AG04450 (cell line): ENCODE measurements at regions of chr6 and their contacts with region 1.

Region 1: DNA sequence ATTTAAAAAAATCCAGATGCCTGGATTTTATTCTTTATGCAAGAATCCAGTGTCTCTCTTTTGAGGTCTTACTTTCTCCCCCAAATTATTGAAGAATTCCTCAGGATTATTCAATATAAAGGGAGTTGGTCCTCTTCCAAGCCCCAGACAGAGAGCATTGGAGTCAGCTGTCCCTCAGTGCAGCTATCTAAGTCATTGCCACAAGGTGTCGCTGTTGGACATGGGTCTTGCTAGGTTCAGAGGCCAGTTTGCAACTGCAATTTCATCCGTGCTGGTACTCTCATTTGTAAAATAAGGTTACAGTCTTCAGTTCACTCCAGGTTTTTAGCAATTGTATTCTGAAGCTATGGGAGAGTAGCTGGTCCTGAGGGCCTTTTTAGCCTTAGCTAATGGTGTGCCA is 27.8 kb downstream of the CCN2 start:
- DNase-seq: no peak
- H3K4me3 ChIP-seq: no peak overlapping the region
- H3K27ac ChIP-seq: no peak overlapping the region
- H3K27me3 ChIP-seq: no peaks in the 10 kb centered on the region
- CTCF ChIP-seq: peak; percentile 53

Region 2: DNA sequence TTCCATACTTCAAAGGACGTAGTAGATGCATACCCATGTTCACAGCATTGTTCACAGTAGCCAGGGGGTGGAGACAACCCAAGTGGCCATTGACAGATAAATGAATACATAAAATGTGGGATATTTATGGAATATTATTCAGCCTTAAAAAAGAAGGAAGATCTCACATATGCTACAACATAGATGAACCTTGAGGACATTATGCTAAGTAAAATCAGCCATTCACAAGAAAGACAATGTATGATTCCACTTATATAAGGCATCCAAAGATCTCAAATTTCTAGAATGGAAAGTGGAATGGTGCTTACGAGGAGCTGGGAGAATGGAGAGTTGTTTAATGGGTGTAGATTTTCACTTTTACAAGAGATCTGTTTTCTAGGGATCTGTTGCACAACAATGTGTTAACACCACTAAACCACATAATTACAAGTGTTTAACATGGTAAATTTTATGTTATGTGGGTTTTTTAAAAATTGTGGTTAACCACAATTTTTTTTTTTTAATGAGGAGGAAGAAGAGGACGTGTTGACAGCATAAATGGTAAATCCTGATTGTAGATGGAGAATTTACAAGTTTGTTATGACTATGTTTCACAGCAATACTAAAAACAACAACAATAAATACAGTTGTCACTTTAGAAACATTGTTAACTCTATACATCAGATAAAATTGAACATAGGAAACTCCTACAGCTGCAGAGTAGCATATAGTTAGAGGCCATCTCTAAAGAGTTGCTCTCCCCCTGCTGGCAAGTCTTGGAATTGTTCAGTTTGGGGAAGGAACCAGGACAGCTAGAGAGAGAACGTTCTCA is 13.7 kb before region 1 on chr6:
- CTCF ChIA-PET with region 1: interaction called, 57 read pairs
- POLR2A ChIA-PET with region 1: no interaction called
- DNase-seq: peak; percentile 47
- H3K4me3 ChIP-seq: no peak overlapping the region
- H3K27ac ChIP-seq: no peak overlapping the region
- H3K27me3 ChIP-seq: no peaks in the 10 kb centered on the region
- CTCF ChIP-seq: peak; percentile 94

Region 3: DNA sequence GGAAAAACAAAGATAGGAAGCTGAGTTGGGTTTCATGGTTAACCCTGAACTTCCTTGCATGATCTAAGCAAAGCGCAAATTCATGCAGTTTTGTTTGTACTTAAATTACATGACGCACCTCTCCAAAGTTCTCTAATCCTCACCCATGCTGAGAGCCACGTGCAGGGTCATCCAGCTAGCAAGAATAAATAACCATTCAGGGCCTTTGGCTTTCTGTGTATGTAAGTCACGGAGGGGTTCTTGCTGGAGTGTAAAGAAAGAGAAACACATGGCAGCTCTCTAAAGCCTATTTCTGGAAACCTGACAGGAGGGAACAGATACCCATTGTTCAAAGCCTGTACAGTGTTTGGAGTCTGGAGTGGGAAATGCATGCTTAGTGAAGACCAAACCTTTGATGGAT is 199.5 kb after region 1 on chr6:
- CTCF ChIA-PET with region 1: interaction called, 13 read pairs
- POLR2A ChIA-PET with region 1: no interaction called
- DNase-seq: peak; percentile 100
- H3K4me3 ChIP-seq: no peak overlapping the region
- H3K27ac ChIP-seq: peak overlapping the region; percentile 98
- H3K27me3 ChIP-seq: no peaks in the 10 kb centered on the region
- CTCF ChIP-seq: no peak

Region 4: GRCh38 chr6:132218059-132218696 is 294.8 kb after region 1 on chr6:
- CTCF ChIA-PET with region 1: interaction called, 43 read pairs
- POLR2A ChIA-PET with region 1: no interaction called
- DNase-seq: peak; percentile 23
- H3K4me3 ChIP-seq: no peak overlapping the region
- H3K27ac ChIP-seq: no peak overlapping the region
- H3K27me3 ChIP-seq: no peaks in the 10 kb centered on the region
- CTCF ChIP-seq: peak; percentile 59

Region 5: GRCh38 chr6:132259070-132259469 is 335.7 kb after region 1 on chr6:
- CTCF ChIA-PET with region 1: interaction called, 57 read pairs
- POLR2A ChIA-PET with region 1: no interaction called
- DNase-seq: no peak
- H3K4me3 ChIP-seq: no peak overlapping the region
- H3K27ac ChIP-seq: no peak overlapping the region
- H3K27me3 ChIP-seq: no peaks in the 10 kb centered on the region
- CTCF ChIP-seq: peak; percentile 52

Region 6: GRCh38 chr6:132270726-132271402 is 347.5 kb after region 1 on chr6:
- CTCF ChIA-PET with region 1: interaction called, 16 read pairs
- POLR2A ChIA-PET with region 1: no interaction called
- DNase-seq: no peak
- H3K4me3 ChIP-seq: no peak overlapping the region
- H3K27ac ChIP-seq: no peak overlapping the region
- H3K27me3 ChIP-seq: no peaks in the 10 kb centered on the region
- CTCF ChIP-seq: no peak

Region 7: GRCh38 chr6:132483779-132484679 is 560.7 kb after region 1 on chr6:
- CTCF ChIA-PET with region 1: interaction called, 22 read pairs
- POLR2A ChIA-PET with region 1: no interaction called
- DNase-seq: peak; percentile 37
- H3K4me3 ChIP-seq: no peak overlapping the region
- H3K27ac ChIP-seq: no peak overlapping the region
- H3K27me3 ChIP-seq: no peaks in the 10 kb centered on the region
- CTCF ChIP-seq: peak; percentile 69